ENCODE measurements at regions of chr10 and their contacts with region 1.

Region 1: DNA sequence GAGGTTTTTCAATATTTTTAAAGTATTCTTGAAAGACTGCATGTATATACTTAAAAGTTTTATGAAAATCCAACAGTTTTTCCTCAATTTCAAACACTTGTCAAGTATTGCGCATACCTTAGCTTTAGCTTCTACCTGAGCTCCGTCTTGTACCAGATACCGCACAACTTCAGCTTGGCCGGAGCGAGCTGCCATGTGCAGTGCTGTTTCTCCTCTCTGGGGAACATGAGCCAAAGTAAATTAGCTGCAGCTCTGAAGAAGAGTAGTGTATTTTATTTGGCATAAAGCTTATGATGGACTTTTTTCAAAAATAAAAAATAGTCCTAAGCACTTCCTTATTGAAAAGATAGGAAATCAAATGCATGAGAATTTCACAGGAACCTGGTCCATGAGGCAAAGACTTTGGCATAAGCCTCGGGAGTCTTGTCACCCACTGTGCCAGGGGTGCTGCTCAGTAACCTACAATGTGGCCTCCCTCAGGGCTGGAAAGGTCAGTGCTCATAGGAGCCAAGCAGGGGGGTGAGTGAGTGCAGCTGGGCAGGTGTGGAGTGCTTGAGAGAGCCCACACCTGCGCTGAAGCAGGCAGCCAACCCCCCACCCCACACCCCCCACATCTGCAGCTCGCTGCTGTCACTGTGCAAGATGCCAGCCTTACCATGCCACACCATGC is 189.5 kb downstream of the ANK3 start:
- DNase-seq: no peak
- ATAC-seq: no peak
- H3K4me3 ChIP-seq: no peak overlapping the region
- H3K4me3 Mint-ChIP-seq: no peak overlapping the region
- H3K27ac ChIP-seq: no peak overlapping the region
- H3K27ac Mint-ChIP-seq: no peak overlapping the region
- H3K4me1 ChIP-seq: no peaks in the 10 kb centered on the region
- H3K4me1 Mint-ChIP-seq: peaks cover 3% of the 10 kb centered on the region
- H3K27me3 ChIP-seq: no peaks in the 10 kb centered on the region
- H3K27me3 Mint-ChIP-seq: no peaks in the 10 kb centered on the region
- CTCF ChIP-seq: no peak

Region 2: GRCh38 chr10:60288256-60288655 is 88.1 kb after region 1 on chr10:
- CTCF ChIA-PET with region 1: interaction called, 3 read pairs
- POLR2A ChIA-PET with region 1: interaction called, 11 read pairs
- intact Hi-C with region 1: no loop called
- DNase-seq: no peak
- ATAC-seq: no peak
- H3K4me3 ChIP-seq: no peak overlapping the region
- H3K4me3 Mint-ChIP-seq: no peak overlapping the region
- H3K27ac ChIP-seq: no peak overlapping the region
- H3K27ac Mint-ChIP-seq: no peak overlapping the region
- H3K4me1 ChIP-seq: peaks cover 3 to 11% of the 10 kb centered on the region in 2 donors
- H3K4me1 Mint-ChIP-seq: peaks cover 19% of the 10 kb centered on the region
- H3K27me3 ChIP-seq: no peaks in the 10 kb centered on the region
- H3K27me3 Mint-ChIP-seq: no peaks in the 10 kb centered on the region
- CTCF ChIP-seq: no peak

Measured in B cell (primary cell).